ENCODE measurements at regions of chr2 and their contacts with region 1.

Region 1: GRCh38 chr2:213151437-213152064 is at the start of gene IKZF2:
- DNase-seq: peak; percentile 58 to 85 (median 69)
- ATAC-seq: peak; percentile 86
- H3K4me3 ChIP-seq: peak within 1 kb of the TSS; percentile 69
- H3K4me3 Mint-ChIP-seq: peak within 1 kb of the TSS; percentile 83 to 96 (median 92)
- H3K27ac ChIP-seq: peak within 1 kb of the TSS; percentile 73
- H3K27ac Mint-ChIP-seq: peak within 1 kb of the TSS; percentile 71 to 92 (median 83)
- H3K4me1 ChIP-seq: no peaks in the 10 kb centered on the region
- H3K4me1 Mint-ChIP-seq: peaks cover 6 to 47% (median 36%) of the 10 kb centered on the region in 7 donors
- H3K27me3 ChIP-seq: peaks cover 0 to 4% of the 10 kb centered on the region in 2 donors
- H3K27me3 Mint-ChIP-seq: peaks cover 41 to 70% (median 50%) of the 10 kb centered on the region in 5 donors
- total RNA-seq, gene IKZF2: 3.4 to 23.4 (median 7.3) TPM

Region 2: DNA sequence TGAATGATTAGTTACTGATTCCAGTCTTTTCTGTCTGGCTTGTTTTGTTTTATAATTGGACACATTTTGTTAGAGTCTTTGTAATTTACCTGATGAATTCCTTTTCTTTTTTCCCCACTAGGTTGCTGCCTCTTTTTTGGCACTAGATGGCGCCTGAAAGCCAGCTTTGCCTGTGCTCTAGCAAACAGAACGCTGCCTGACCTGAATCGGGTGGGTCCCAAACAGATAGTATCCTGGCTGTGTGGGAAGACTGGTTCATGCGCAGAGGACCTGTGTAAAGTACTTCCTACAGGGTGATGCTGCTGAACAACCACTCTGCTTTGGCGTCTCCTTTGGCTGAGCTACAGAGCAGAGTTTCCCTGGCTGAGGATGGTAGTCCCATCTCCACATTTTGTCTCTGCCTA is 288.4 kb before region 1 on chr2:
- CTCF ChIA-PET with region 1: no interaction called
- POLR2A ChIA-PET with region 1: no interaction called
- intact Hi-C with region 1: loop called in 1 of 2 experiments (anchors 1 kb)
- DNase-seq: peak in 1 of 9 donors; percentile 14
- ATAC-seq: no peak
- H3K4me3 ChIP-seq: no peak overlapping the region
- H3K4me3 Mint-ChIP-seq: no peak overlapping the region
- H3K27ac ChIP-seq: no peak overlapping the region
- H3K27ac Mint-ChIP-seq: peak overlapping the region in 1 of 9 donors; percentile 5
- H3K4me1 ChIP-seq: no peaks in the 10 kb centered on the region
- H3K4me1 Mint-ChIP-seq: no peaks in the 10 kb centered on the region
- H3K27me3 ChIP-seq: no peaks in the 10 kb centered on the region
- H3K27me3 Mint-ChIP-seq: peaks cover 0 to 7% (median 0%) of the 10 kb centered on the region in 5 donors

Region 3: DNA sequence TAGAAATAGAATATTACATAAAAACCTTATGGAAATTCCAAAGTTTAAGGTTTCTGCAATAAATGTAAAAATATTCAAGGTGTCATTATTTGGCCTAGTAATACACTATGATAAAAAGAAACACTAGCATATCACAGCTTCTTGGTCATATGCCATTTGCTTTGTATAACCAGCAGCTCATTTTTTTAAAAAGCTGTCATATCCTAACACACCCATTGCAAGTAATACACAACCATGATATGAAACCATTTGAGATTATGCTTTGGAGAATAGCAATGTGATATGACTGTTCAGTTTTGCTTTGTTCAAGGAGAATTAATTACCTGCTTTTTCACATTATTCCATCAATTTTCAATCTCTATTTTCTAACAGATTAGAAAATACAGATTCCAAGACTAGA is 149.2 kb before region 1 on chr2:
- CTCF ChIA-PET with region 1: no interaction called
- POLR2A ChIA-PET with region 1: no interaction called
- intact Hi-C with region 1: loop called in 1 of 2 experiments (anchors 10 kb)
- DNase-seq: no peak
- ATAC-seq: no peak
- H3K4me3 ChIP-seq: no peak overlapping the region
- H3K4me3 Mint-ChIP-seq: peak overlapping the region in 1 of 10 donors; percentile 74
- H3K27ac ChIP-seq: no peak overlapping the region
- H3K27ac Mint-ChIP-seq: no peak overlapping the region
- H3K4me1 ChIP-seq: no peaks in the 10 kb centered on the region
- H3K4me1 Mint-ChIP-seq: peaks cover 0 to 28% (median 5%) of the 10 kb centered on the region in 7 donors
- H3K27me3 ChIP-seq: no peaks in the 10 kb centered on the region
- H3K27me3 Mint-ChIP-seq: peaks cover 0 to 6% (median 0%) of the 10 kb centered on the region in 5 donors

Region 4: GRCh38 chr2:213104092-213104902 is 47.3 kb before region 1 on chr2:
- CTCF ChIA-PET with region 1: no interaction called
- POLR2A ChIA-PET with region 1: no interaction called
- intact Hi-C with region 1: loop called in 1 of 2 experiments (anchors 2 kb)
- DNase-seq: peak in 3 of 9 donors; percentile 21 to 27 (median 21)
- ATAC-seq: peak; percentile 61
- H3K4me3 ChIP-seq: no peak overlapping the region
- H3K4me3 Mint-ChIP-seq: peak overlapping the region in 9 of 10 donors; percentile 12 to 74 (median 63)
- H3K27ac ChIP-seq: peak overlapping the region; percentile 22
- H3K27ac Mint-ChIP-seq: peak overlapping the region in 7 of 9 donors; percentile 0 to 79 (median 56)
- H3K4me1 ChIP-seq: peaks cover 4 to 5% of the 10 kb centered on the region in 2 donors
- H3K4me1 Mint-ChIP-seq: peaks cover 0 to 44% (median 15%) of the 10 kb centered on the region in 7 donors
- H3K27me3 ChIP-seq: no peaks in the 10 kb centered on the region
- H3K27me3 Mint-ChIP-seq: peaks cover 0 to 5% (median 0%) of the 10 kb centered on the region in 5 donors

Region 5: GRCh38 chr2:213284105-213285090 is 132.8 kb after region 1 on chr2 and contains the start of gene SPAG16:
- CTCF ChIA-PET with region 1: no interaction called
- POLR2A ChIA-PET with region 1: no interaction called
- intact Hi-C with region 1: loop called (anchors 1 kb)
- DNase-seq: peak; percentile 85 to 96 (median 95)
- ATAC-seq: peak; percentile 98
- H3K4me3 ChIP-seq: peak within 1 kb of the TSS; percentile 90
- H3K4me3 Mint-ChIP-seq: peak within 1 kb of the TSS; percentile 88 to 99 (median 95)
- H3K27ac ChIP-seq: peak within 1 kb of the TSS; percentile 69
- H3K27ac Mint-ChIP-seq: peak within 1 kb of the TSS; percentile 78 to 97 (median 92)
- H3K4me1 ChIP-seq: peaks cover 13 to 15% of the 10 kb centered on the region in 2 donors
- H3K4me1 Mint-ChIP-seq: peaks cover 12 to 49% (median 34%) of the 10 kb centered on the region in 7 donors
- H3K27me3 ChIP-seq: no peaks in the 10 kb centered on the region
- H3K27me3 Mint-ChIP-seq: peaks cover 0 to 6% (median 0%) of the 10 kb centered on the region in 5 donors
- total RNA-seq, gene SPAG16: 4.7 to 9.7 (median 6.2) TPM

Measured in naive thymus-derived CD4-positive, alpha-beta T cell (primary cell).